ENCODE measurements at regions of chr12 and their contacts with region 1.

Region 1: GRCh38 chr12:45215419-45216229 is at the start of gene ANO6:
- DNase-seq: peak; percentile 82
- H3K4me3 Mint-ChIP-seq: peak within 1 kb of the TSS; percentile 97
- H3K27ac Mint-ChIP-seq: peak within 1 kb of the TSS; percentile 95
- H3K4me1 Mint-ChIP-seq: peaks cover 36% of the 10 kb centered on the region
- H3K27me3 Mint-ChIP-seq: no peaks in the 10 kb centered on the region
- total RNA-seq, gene ANO6: 12.9 to 14.6 TPM

Region 2: DNA sequence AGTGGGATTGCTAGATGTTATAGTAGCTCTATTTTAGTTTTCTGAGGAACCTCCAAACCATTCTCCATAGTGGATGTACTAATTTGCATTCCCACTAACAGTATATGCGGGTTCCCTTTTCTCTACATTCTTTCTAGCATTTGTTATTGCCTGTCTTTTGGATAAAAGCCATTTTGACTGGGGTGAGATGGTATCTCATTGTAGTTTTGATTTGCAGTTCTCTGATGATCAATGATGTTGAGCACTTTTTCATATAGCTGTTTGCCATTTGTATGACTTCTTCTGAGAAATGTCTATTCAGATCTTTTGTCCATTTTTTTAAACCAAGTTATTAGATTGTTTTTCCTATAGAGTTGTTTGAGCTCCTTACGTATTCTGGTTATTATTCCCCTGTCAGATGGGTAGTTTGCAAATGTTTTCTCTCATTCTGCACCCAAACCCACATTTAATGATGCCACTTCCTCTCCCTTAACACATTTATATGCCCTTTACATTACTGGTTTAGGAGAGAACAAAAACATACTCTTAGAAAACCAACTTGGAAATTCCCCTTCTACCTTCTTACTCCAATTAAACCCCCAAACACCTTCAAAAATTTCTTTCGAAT is 387.7 kb before region 1 on chr12:
- CTCF ChIA-PET with region 1: no interaction called
- intact Hi-C with region 1: loop called (anchors 5 kb)
- DNase-seq: no peak
- H3K4me3 Mint-ChIP-seq: peak overlapping the region; percentile 58
- H3K27ac Mint-ChIP-seq: peak overlapping the region; percentile 89
- H3K4me1 Mint-ChIP-seq: peaks cover 64% of the 10 kb centered on the region
- H3K27me3 Mint-ChIP-seq: no peaks in the 10 kb centered on the region

Region 3: DNA sequence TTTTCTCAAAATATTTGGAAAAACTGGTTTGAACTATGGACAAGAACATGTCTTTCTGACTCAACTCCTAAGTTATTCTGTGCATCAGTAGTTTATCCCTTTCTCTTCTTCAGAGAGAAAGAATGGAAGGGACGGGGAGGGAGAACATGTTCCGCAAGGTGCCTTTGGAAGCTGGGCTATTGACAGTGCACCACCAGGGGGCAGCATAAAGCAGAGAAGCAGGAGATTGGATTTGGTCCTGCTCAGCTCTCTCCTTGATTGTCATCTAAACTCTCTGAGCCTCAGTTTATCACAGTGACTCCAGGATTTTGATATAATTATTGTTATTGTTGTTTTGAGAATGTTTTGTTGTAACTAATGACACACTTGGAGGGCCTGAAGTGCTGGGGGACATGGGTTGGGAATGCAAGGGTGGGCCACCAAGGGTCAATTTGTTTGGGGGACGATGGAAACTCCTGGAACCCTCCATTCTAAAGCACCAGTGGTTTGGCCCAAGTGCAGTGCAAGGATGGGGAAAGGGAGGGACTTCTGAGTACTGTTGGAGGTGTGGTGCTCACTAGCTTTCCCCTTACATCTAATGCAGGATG is 45.1 kb before region 1 on chr12:
- CTCF ChIA-PET with region 1: interaction called, 5 read pairs
- intact Hi-C with region 1: loop called (anchors 2 kb)
- DNase-seq: peak; percentile 92
- H3K4me3 Mint-ChIP-seq: no peak overlapping the region
- H3K27ac Mint-ChIP-seq: no peak overlapping the region
- H3K4me1 Mint-ChIP-seq: no peaks in the 10 kb centered on the region
- H3K27me3 Mint-ChIP-seq: no peaks in the 10 kb centered on the region

Region 4: GRCh38 chr12:45388545-45388944 is 172.9 kb after region 1 on chr12:
- CTCF ChIA-PET with region 1: interaction called, 3 read pairs
- intact Hi-C with region 1: loop called (anchors 1 kb)
- DNase-seq: peak; percentile 24
- H3K4me3 Mint-ChIP-seq: no peak overlapping the region
- H3K27ac Mint-ChIP-seq: no peak overlapping the region
- H3K4me1 Mint-ChIP-seq: no peaks in the 10 kb centered on the region
- H3K27me3 Mint-ChIP-seq: no peaks in the 10 kb centered on the region

Region 5: DNA sequence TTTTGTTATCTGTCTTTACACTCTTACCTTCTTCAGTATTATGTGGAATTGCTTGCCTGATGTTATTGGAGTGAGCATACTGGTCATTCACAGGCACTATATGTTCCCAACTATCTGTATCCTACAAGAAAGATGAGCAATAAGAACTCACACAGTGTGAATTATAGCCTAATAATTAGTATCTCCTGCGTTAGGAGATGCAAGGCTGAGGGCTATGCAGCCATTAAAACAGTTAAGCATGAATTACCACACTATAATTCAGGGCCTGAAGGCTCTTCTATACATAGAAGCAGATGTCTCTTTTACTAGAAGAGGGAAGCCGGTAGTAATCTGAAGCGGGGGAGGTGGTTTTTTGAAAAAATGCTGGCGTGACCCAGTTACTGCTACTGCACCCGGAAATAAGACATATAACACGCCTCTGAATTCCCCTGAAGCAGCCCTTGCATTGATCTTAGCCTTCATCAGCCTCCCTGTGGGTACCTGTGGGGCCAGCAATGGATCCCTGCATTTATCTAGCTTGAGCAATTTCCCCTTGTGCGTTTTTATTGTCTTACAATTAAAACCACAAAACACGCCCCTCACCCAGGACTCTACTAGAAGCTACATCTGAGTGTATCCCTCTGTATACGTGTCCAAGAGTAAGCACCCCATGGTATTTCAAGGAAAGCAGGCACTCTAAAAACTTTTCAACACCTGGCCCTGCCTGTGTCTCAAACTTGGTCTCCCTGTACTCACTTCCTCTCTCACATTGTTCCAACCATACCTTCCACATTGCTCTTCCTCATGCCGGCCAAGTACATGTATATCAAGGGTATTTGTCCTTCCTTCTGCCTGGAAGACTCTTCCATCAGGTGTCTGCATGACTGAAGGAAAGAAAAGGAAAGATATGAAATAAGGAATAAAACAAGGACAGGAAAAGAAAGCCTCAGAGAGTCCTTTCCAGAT is 302.9 kb after region 1 on chr12:
- CTCF ChIA-PET with region 1: no interaction called
- intact Hi-C with region 1: loop called (anchors 1 kb)
- DNase-seq: peak; percentile 83
- H3K4me3 Mint-ChIP-seq: peak overlapping the region; percentile 40
- H3K27ac Mint-ChIP-seq: peak overlapping the region; percentile 85
- H3K4me1 Mint-ChIP-seq: peaks cover 12% of the 10 kb centered on the region
- H3K27me3 Mint-ChIP-seq: no peaks in the 10 kb centered on the region

Region 6: DNA sequence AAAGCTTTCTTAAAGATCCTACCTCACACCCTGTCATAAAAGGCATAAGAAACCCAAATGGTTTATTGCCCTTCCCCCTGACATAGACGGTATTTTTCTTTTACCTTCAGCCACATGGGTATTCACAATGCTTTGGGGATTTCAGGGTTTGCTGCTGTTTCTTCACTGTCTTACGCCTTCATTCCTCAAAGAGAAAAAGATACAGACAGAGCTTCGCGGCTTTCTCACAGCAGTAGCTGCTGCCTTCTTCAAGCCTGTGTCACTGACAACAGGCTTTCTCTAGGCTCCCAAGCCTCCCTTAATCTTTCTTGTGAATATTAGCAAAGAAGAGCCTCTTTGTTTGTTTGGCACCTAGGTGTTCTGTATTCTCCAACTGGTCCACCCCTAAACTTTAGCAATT is 316.5 kb after region 1 on chr12:
- CTCF ChIA-PET with region 1: no interaction called
- intact Hi-C with region 1: loop called (anchors 1 kb)
- DNase-seq: no peak
- H3K4me3 Mint-ChIP-seq: no peak overlapping the region
- H3K27ac Mint-ChIP-seq: no peak overlapping the region
- H3K4me1 Mint-ChIP-seq: no peaks in the 10 kb centered on the region
- H3K27me3 Mint-ChIP-seq: no peaks in the 10 kb centered on the region

Measured in activated naive CD4-positive, alpha-beta T cell treated with anti-CD3 and anti-CD28 coated beads for 36 hours (primary cell).